OCI-LY7 (cell line): ENCODE measurements at regions of chr4 and their contacts with region 1.

Region 1: DNA sequence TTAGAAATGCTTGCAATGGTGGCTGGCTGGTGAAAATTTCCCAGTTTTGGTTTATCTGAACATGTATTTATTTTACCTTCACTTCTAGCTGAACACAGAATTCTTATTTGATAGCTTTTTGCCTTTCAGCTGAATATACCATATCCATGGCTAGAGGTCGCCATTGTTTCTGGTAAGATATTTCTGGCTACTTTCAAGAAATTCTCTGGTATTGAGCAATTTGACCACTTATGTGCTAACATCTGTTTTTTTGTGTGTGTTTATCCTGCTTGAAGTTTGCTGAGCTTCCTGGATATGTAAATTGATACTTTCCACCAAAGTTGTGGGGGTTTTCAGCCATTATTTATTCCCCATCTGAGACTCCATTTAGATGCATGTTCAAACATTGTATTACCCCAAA is 75.4 kb downstream of the FBXW7 start:
- DNase-seq: peak; percentile 29
- H3K4me3 ChIP-seq: no peak overlapping the region
- H3K27ac ChIP-seq: no peak overlapping the region
- H3K4me1 ChIP-seq: peaks cover 71% of the 10 kb centered on the region
- CTCF ChIP-seq: peak; percentile 74

Region 2: DNA sequence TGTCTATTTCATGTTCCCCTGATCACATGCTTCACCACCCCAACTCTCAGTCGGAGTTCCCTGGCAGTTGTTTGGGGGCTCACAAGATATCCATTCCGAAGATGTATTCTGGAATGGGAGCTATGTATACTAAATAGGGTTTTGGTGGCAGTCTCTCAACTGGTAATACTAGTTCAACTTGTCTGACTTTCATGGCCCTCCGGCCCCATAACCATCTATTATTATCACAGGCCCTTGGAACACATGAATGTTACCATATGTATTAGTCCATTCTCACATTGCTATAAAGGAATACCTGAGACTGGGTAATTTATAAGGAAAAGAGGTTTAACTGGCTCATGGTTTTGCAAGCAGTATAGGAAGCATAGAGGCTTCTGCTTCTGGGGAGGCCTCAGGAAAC is 562.4 kb before region 1 on chr4:
- CTCF ChIA-PET with region 1: no interaction called
- POLR2A ChIA-PET with region 1: no interaction called
- intact Hi-C with region 1: no loop called
- DNase-seq: no peak
- H3K4me3 ChIP-seq: no peak overlapping the region
- H3K27ac ChIP-seq: no peak overlapping the region
- H3K4me1 ChIP-seq: no peaks in the 10 kb centered on the region
- CTCF ChIP-seq: no peak

Region 3: GRCh38 chr4:152185786-152186550 is 274.5 kb before region 1 on chr4:
- CTCF ChIA-PET with region 1: no interaction called
- POLR2A ChIA-PET with region 1: no interaction called
- intact Hi-C with region 1: no loop called
- DNase-seq: no peak
- H3K4me3 ChIP-seq: no peak overlapping the region
- H3K27ac ChIP-seq: no peak overlapping the region
- H3K4me1 ChIP-seq: peaks cover 14% of the 10 kb centered on the region
- CTCF ChIP-seq: no peak

Region 4: DNA sequence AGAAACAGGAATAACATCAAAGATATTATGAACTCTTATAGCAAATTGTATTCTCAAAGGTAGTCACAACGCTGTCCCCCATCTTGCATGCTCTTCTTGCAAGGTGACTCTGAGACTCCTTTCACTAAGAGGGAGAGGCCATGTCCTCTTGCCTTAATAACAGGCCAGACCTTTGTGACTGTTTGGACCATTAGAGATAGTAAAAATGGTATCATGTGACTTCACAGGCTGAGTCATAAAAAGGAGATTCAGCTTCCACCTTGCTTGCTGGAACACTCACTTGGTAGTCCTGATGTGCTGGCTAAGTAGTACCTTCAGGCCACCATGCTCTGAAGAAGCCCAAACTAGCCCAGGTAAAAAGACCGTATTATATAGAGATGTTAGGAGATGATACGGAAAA is 68.4 kb before region 1 on chr4:
- CTCF ChIA-PET with region 1: no interaction called
- POLR2A ChIA-PET with region 1: no interaction called
- intact Hi-C with region 1: no loop called
- DNase-seq: no peak
- H3K4me3 ChIP-seq: no peak overlapping the region
- H3K27ac ChIP-seq: no peak overlapping the region
- H3K4me1 ChIP-seq: no peaks in the 10 kb centered on the region
- CTCF ChIP-seq: no peak

Region 5: DNA sequence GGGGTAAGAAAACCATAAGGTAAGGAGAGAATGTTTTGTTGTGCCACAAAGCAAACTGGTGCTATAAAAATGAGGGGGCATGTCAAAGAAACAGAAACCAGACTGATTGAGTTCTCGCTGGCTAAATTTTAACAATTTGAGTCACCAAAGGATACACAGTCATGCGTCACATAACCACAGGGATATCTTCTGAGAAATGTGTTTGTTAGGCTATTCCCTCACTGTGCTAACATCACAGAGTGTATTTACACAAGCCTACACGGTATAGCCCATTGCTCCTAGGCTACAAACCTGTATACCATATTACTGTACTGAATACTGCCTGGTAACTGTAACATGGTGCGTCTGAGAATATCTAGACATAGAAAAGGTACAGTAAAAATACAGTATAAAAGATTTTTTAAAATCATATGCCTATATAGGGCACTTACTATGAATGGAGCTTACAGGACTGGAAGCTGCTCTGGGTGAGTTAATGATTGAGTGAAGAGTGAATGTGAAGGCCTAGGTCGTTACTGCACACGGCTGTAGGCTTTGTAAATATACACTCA is 25.3 kb after region 1 on chr4:
- CTCF ChIA-PET with region 1: interaction called, 3 read pairs
- POLR2A ChIA-PET with region 1: interaction called, 11 read pairs
- intact Hi-C with region 1: no loop called
- DNase-seq: no peak
- H3K4me3 ChIP-seq: no peak overlapping the region
- H3K27ac ChIP-seq: no peak overlapping the region
- H3K4me1 ChIP-seq: no peaks in the 10 kb centered on the region
- CTCF ChIP-seq: no peak

Region 6: GRCh38 chr4:152556283-152556682 is 95.8 kb after region 1 on chr4:
- CTCF ChIA-PET with region 1: no interaction called
- POLR2A ChIA-PET with region 1: interaction called, 7 read pairs
- intact Hi-C with region 1: loop called (anchors 5 kb)
- DNase-seq: peak; percentile 67
- H3K4me3 ChIP-seq: peak overlapping the region; percentile 65
- H3K27ac ChIP-seq: peak overlapping the region; percentile 46
- H3K4me1 ChIP-seq: peaks cover 65% of the 10 kb centered on the region
- CTCF ChIP-seq: no peak